Heart right ventricle (tissue), 16 donors: ENCODE measurements at regions of chr13 and their contacts with region 1.

Region 1: GRCh38 chr13:108961542-108962125 is 332.2 kb downstream of the MYO16 start:
- DNase-seq: no peak
- ATAC-seq: peak; percentile 77 to 88 (median 82)
- H3K4me3 ChIP-seq: no peak overlapping the region
- H3K27ac ChIP-seq: no peak overlapping the region
- H3K4me1 ChIP-seq: no peaks in the 10 kb centered on the region
- H3K27me3 ChIP-seq: no peaks in the 10 kb centered on the region
- CTCF ChIP-seq: peak; percentile 72 to 92 (median 88)

Region 2: DNA sequence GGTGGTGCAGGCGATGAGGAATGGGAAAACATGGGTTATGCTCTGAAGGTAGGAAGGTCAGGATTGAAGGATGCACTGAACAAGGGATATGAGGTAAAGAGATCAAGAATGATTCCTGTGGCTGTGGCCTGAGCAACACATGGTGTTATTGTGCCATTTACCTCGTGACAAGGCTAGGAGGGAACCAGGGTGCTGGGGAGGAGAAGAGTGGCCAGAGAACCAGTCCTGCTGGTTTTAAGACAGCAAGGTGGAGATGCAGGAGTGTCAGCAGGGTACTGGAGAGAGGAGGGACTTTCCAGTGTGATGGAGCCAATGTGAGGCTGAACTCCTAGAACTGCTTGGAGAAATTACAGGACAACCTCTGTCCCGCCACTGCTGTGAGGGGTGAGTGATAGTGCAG is 49.8 kb before region 1 on chr13:
- intact Hi-C with region 1: loop called in 1 of 10 experiments (anchors 5 kb)
- DNase-seq: no peak
- ATAC-seq: no peak
- H3K4me3 ChIP-seq: no peak overlapping the region
- H3K27ac ChIP-seq: no peak overlapping the region
- H3K4me1 ChIP-seq: peaks cover 0 to 21% (median 13%) of the 10 kb centered on the region in 9 donors
- H3K27me3 ChIP-seq: no peaks in the 10 kb centered on the region
- CTCF ChIP-seq: no peak

Region 3: GRCh38 chr13:109131698-109132257 is 170.1 kb after region 1 on chr13:
- intact Hi-C with region 1: loop called in 1 of 10 experiments (anchors 10 kb)
- DNase-seq: no peak
- ATAC-seq: peak; percentile 55 to 83 (median 69)
- H3K4me3 ChIP-seq: no peak overlapping the region
- H3K27ac ChIP-seq: no peak overlapping the region
- H3K4me1 ChIP-seq: peaks cover 0 to 13% (median 0%) of the 10 kb centered on the region in 9 donors
- H3K27me3 ChIP-seq: no peaks in the 10 kb centered on the region
- CTCF ChIP-seq: no peak

Region 4: DNA sequence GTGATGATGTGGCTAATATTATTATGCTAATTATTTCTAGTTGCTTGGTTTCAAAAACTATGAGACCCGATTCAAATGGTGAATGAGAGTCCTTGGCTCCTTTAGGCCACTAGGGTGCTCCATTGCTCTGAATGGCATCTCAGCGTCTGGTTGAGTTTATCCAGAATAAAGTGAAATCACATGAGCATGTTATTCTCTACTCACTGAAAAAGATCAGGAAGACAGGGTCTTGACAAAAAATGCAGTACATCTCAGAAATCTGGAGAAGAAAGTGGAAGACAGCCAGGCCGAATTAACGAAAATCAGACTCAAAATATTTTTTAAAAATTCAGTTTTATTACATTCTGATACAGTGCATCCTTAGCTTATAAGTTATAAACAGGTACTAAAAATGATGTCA is 184.0 kb after region 1 on chr13:
- intact Hi-C with region 1: loop called in 1 of 10 experiments (anchors 5 kb)
- DNase-seq: peak in 1 of 2 donors; percentile 42
- ATAC-seq: peak in 7 of 8 donors; percentile 58 to 90 (median 84)
- H3K4me3 ChIP-seq: no peak overlapping the region
- H3K27ac ChIP-seq: no peak overlapping the region
- H3K4me1 ChIP-seq: peaks cover 0 to 4% (median 0%) of the 10 kb centered on the region in 9 donors
- H3K27me3 ChIP-seq: peaks cover 4 to 24% (median 18%) of the 10 kb centered on the region in 7 donors
- CTCF ChIP-seq: peak; percentile 54 to 80 (median 69)

Region 5: DNA sequence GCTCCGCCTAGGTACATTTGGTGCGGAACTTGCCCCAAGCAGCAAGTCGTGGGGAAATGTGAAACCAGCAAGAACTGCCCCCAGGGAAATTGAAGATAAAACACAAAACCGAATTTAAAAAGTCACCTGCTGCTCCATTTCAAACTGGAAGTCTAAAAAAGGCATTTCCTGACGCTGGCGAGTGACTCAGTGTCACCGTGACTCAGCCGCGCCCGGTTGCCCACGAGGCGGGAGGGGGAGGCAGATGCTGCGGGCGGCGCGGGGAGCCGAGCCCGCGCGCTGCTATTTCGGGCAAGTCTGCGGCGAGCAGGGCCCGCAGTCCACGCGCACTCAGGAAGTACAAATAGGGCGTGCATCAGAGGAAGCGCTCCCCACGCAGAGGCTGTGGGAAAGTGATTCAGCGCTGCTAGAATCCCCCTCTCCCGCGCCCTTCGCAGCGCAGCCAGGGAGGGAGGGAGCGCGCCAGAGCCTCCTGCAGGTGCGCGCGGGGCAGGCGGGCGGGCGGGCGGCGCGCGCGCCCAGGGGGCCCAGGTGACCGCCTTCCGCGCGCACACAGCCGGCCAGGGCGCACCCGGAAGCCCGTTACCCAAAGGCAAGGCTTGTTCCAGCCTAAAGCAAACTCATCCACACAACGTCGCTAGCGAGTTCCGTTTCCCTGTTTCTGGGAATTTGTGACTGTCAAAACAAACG is 1176.5 kb after region 1 on chr13:
- intact Hi-C with region 1: loop called in 1 of 10 experiments (anchors 5 kb)
- DNase-seq: peak; percentile 56 to 60
- ATAC-seq: peak; percentile 34 to 75 (median 62)
- H3K4me3 ChIP-seq: peak overlapping the region; percentile 51 to 69 (median 62)
- H3K27ac ChIP-seq: peak overlapping the region; percentile 74 to 93 (median 86)
- H3K4me1 ChIP-seq: peaks cover 2 to 44% (median 17%) of the 10 kb centered on the region in 9 donors
- H3K27me3 ChIP-seq: no peaks in the 10 kb centered on the region
- CTCF ChIP-seq: peak in 3 of 9 donors; percentile 5 to 34 (median 28)